ENCODE measurements at regions of chr6 and their contacts with region 1.

Region 1: DNA sequence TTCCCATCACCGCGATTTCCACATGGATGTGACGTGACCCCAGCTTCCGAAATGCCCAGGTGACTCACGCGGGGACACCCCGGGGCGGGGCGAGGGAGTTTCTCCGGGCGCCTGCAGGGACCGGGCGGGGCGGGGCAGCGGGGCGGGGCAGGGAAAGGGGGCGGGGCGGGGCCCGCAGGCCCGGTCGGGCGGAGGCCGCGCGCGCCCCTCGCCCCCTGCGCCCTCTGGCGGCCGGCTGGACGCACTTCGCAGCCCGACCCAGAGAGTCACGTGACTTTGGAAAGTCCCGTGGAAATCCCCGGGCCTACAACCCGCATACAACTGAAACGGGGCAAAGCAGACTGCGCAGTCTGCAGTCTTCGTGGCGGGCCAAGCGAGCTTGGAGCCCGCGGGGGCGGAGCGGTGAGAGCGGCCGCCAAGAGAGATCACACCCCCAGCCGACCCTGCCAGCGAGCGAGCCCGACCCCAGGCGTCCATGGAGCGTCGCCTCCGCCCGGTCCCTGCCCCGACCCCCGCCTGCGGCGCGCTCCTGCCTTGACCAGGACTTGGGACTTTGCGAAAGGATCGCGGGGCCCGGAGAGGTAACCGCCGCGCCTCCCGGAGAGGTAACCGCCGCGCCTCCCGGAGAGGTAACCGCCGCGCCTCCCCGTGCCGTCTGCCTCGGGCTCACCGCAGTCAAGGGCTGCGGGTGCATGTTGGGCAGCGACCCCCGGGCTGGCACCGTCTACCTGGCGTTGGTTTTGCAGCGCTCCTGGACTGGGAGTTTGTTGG is at the start of gene TNFAIP3:
- DNase-seq: peak; percentile 84
- ATAC-seq: peak; percentile 78
- H3K4me3 ChIP-seq: peak within 1 kb of the TSS; percentile 99
- H3K27ac ChIP-seq: peak within 1 kb of the TSS; percentile 72
- H3K4me1 ChIP-seq: peaks cover 5% of the 10 kb centered on the region; the same call in 1 of the 2 replicates
- H3K27me3 ChIP-seq: no peaks in the 10 kb centered on the region
- CTCF ChIP-seq: peak; percentile 63 to 83 (median 70)
- EP300 ChIP-seq: peak; percentile 64 to 90
- POLR2A ChIP-seq: peak; percentile 95
- RAD21 ChIP-seq: peak; percentile 73
- polyA plus RNA-seq, gene TNFAIP3: 18.0 to 31.5 TPM

Region 2: DNA sequence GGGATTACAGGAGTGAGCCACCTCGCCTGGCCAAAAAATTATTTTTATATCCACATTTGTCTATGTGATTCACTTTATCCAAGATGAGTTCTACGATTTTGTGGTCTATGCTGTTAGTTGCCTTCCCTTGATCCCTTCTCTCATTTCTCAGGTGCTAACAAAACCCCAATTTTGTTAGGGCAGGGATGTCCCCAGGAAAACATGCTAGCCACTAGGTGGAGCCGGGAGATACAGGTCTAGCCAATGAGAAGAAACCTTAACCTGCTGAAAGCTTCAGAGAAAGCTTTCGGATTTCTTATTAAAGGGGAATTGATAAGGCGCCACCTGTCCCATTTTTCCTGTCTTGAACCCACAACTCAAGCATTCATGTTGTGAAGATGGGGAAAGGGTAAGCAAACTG is 205.5 kb before region 1 on chr6:
- CTCF ChIA-PET with region 1: interaction called, 11 read pairs
- POLR2A ChIA-PET with region 1: interaction called, 3 read pairs
- RAD21 ChIA-PET with region 1: interaction called, 6 read pairs
- SMC1A ChIA-PET with region 1: interaction called, 7 read pairs
- in situ Hi-C with region 1: no loop called
- intact Hi-C with region 1: loop called (anchors 5 kb)
- DNase-seq: no peak
- ATAC-seq: peak; percentile 69
- H3K4me3 ChIP-seq: no peak overlapping the region
- H3K27ac ChIP-seq: no peak overlapping the region
- H3K4me1 ChIP-seq: peaks cover 5% of the 10 kb centered on the region; the same call in 1 of the 2 replicates
- H3K27me3 ChIP-seq: no peaks in the 10 kb centered on the region
- CTCF ChIP-seq: peak; percentile 51 to 75 (median 68)
- EP300 ChIP-seq: no peak
- POLR2A ChIP-seq: no peak
- RAD21 ChIP-seq: peak; percentile 66

Region 3: GRCh38 chr6:137791281-137792159 is 75.6 kb before region 1 on chr6:
- CTCF ChIA-PET with region 1: interaction called, 12 read pairs
- POLR2A ChIA-PET with region 1: interaction called, 7 read pairs
- RAD21 ChIA-PET with region 1: interaction called, 117 read pairs
- SMC1A ChIA-PET with region 1: interaction called, 314 read pairs
- in situ Hi-C with region 1: no loop called
- intact Hi-C with region 1: no loop called
- DNase-seq: no peak
- ATAC-seq: peak; percentile 29
- H3K4me3 ChIP-seq: peak overlapping the region; percentile 25
- H3K27ac ChIP-seq: peak overlapping the region; percentile 89
- H3K4me1 ChIP-seq: peaks cover 18% of the 10 kb centered on the region
- H3K27me3 ChIP-seq: no peaks in the 10 kb centered on the region
- CTCF ChIP-seq: no peak
- EP300 ChIP-seq: no peak
- POLR2A ChIP-seq: no peak
- RAD21 ChIP-seq: no peak

Region 4: DNA sequence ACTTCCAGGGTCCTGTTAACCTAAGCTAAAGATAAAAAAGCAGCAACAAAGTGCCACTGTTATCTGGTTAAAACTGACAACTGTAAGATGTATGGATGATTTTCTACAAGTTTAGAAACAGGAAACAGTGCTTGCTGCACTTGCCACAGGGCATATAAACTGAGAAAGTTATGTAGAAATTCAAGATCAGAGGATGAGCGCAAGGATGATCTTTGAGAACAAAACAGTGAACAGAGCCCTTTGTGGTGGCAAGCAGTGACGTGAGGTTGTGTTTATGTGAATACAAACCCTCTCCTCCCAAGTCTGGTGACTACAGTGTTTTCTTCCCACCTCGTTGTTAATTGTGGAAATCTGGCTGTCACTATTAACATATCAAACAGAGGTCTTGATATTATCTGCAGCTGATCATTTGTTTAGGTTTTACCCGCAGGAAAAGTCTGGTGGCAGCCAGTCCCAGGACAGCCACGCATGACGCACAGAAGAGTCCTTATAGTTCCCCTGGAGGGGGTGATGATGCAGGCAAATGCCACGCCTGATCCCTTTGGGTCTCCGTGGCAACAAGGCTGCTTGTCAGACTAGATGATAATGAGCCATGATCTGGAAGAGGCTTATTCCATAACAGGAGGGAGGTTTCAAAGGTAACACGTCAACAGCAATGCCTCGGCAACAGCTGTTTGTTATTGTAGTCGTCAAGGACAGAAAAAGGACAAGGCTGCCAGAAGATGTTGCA is 43.1 kb before region 1 on chr6:
- CTCF ChIA-PET with region 1: interaction called, 8 read pairs
- POLR2A ChIA-PET with region 1: interaction called, 9 read pairs
- RAD21 ChIA-PET with region 1: interaction called, 14 read pairs
- SMC1A ChIA-PET with region 1: interaction called, 83 read pairs
- in situ Hi-C with region 1: no loop called
- intact Hi-C with region 1: no loop called
- DNase-seq: no peak
- ATAC-seq: peak; percentile 21
- H3K4me3 ChIP-seq: no peak overlapping the region
- H3K27ac ChIP-seq: no peak overlapping the region; the same call in 1 of the 2 replicates
- H3K4me1 ChIP-seq: peaks cover 32% of the 10 kb centered on the region
- H3K27me3 ChIP-seq: no peaks in the 10 kb centered on the region
- CTCF ChIP-seq: no peak
- EP300 ChIP-seq: no peak
- POLR2A ChIP-seq: no peak
- RAD21 ChIP-seq: no peak

Region 5: GRCh38 chr6:137878486-137879285 is 11.6 kb after region 1 on chr6:
- CTCF ChIA-PET with region 1: interaction called, 21 read pairs
- POLR2A ChIA-PET with region 1: interaction called, 20 read pairs
- RAD21 ChIA-PET with region 1: interaction called, 22 read pairs
- SMC1A ChIA-PET with region 1: interaction called, 85 read pairs
- in situ Hi-C with region 1: no loop called
- intact Hi-C with region 1: no loop called
- DNase-seq: no peak
- ATAC-seq: peak; percentile 4; the same call in 2 of the 3 replicates
- H3K4me3 ChIP-seq: peak overlapping the region; percentile 56; the same call in 1 of the 2 replicates
- H3K27ac ChIP-seq: peak overlapping the region; percentile 9; the same call in 1 of the 2 replicates
- H3K4me1 ChIP-seq: peaks cover 10% of the 10 kb centered on the region; the same call in 1 of the 2 replicates
- H3K27me3 ChIP-seq: no peaks in the 10 kb centered on the region
- CTCF ChIP-seq: no peak; a peak in 2 of 6 replicates
- EP300 ChIP-seq: no peak
- POLR2A ChIP-seq: peak; percentile 53; the same call in 1 of the 2 replicates
- RAD21 ChIP-seq: no peak

Region 6: DNA sequence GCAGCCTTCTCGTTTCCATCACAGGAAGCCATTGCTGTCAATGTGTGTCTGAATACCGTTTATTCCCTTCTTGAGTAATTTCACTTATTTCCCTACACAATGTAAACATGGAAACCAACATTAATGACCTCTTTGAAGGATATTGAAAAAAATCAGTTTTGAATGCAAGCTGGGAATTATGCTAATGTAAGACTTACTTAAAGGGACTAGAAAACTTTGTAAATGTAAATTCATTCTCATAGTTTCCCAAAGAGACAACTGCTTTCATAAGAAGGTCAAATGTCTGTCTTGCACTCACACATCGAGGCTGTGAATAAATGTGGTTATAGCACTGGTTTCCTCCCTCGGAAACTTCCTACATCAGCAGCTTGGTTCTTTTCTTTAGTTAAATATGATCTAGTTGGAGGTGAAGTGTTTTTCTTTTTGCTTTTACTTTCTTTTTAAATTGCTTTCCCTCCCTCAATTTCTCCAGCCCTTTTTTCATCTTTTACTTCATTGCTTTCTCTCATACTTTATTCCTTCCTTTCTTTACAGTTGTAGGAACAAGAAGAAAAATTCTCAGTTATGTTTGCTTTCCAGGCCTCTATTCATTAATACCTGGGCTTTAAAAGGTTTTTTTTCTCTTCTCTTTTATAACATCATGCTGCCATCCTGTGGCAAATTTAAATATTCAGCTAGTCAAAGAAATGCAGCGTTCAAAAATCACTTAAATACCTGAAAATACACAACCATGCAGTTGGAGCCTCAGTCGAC is 108.3 kb after region 1 on chr6:
- CTCF ChIA-PET with region 1: interaction called, 70 read pairs
- POLR2A ChIA-PET with region 1: interaction called, 8 read pairs
- RAD21 ChIA-PET with region 1: interaction called, 16 read pairs
- SMC1A ChIA-PET with region 1: interaction called, 41 read pairs
- in situ Hi-C with region 1: no loop called
- intact Hi-C with region 1: loop called (anchors 1 kb)
- DNase-seq: peak; percentile 53
- ATAC-seq: peak; percentile 67
- H3K4me3 ChIP-seq: peak overlapping the region; percentile 1; the same call in 1 of the 2 replicates
- H3K27ac ChIP-seq: peak overlapping the region; percentile 34
- H3K4me1 ChIP-seq: peaks cover 36% of the 10 kb centered on the region
- H3K27me3 ChIP-seq: no peaks in the 10 kb centered on the region
- CTCF ChIP-seq: peak; percentile 23 to 62 (median 44); a peak in 5 of 6 replicates
- EP300 ChIP-seq: no peak
- POLR2A ChIP-seq: no peak
- RAD21 ChIP-seq: peak; percentile 81